ENCODE measurements at regions of chr4 and their contacts with region 1.

Region 1: DNA sequence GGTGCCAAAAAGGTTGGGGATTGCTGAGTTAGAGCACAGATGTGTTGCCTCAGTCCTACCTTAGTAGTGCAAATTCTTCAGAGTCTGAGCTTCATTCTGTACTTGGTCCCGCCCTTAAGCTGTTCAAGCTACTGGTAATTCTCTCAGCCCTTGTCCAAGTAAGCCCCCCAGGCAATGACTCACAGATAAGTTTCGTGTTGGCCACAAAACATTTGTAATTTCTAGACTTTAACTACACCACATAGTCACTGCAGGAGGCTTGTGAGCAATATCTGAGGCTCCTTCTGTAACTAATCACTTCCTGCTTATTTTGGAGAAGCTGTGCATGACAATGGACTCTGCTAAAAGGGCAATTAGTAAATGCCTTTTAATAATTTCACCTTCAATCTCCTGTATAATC is 1420.5 kb downstream of the PCDH7 start:
- DNase-seq: no peak
- ATAC-seq: peak; percentile 95
- H3K4me3 ChIP-seq: no peak overlapping the region
- H3K27ac ChIP-seq: no peak overlapping the region
- H3K4me1 ChIP-seq: no peaks in the 10 kb centered on the region
- H3K27me3 ChIP-seq: no peaks in the 10 kb centered on the region
- CTCF ChIP-seq: no peak
- EP300 ChIP-seq: no peak
- POLR2A ChIP-seq: no peak
- RAD21 ChIP-seq: no peak

Region 2: DNA sequence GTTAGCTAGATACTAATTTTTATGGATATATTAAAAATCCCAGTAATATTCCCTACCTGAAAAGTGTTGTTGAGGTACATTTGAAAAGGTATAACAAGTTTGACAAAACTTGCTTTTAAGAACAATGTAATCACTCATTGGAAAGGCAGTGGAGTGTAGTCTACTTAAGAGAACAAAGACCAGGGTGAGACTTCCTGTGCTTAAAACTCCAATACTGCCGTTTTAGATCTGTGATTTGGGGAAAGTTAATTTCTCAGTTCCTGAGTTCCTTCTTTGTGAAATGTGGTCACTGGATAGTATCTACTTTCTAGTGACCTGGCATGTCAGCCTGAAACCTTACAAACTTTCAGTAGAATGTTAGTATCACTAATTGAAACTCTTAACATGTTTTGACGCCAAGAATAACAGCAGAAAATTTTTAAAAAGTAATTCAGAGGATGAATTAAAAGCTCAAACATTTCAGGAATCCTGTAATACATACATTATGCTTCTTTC is 1363.7 kb before region 1 on chr4:
- CTCF ChIA-PET with region 1: no interaction called
- POLR2A ChIA-PET with region 1: no interaction called
- RAD21 ChIA-PET with region 1: no interaction called
- SMC1A ChIA-PET with region 1: no interaction called
- in situ Hi-C with region 1: no loop called
- intact Hi-C with region 1: loop called (anchors 5 kb)
- DNase-seq: no peak
- ATAC-seq: no peak
- H3K4me3 ChIP-seq: no peak overlapping the region
- H3K27ac ChIP-seq: no peak overlapping the region
- H3K4me1 ChIP-seq: no peaks in the 10 kb centered on the region
- H3K27me3 ChIP-seq: no peaks in the 10 kb centered on the region
- CTCF ChIP-seq: no peak
- EP300 ChIP-seq: no peak
- POLR2A ChIP-seq: no peak
- RAD21 ChIP-seq: no peak

Measured in GM12878 (cell line).